ENCODE measurements at regions of chr5 and their contacts with region 1.

Region 1: GRCh38 chr5:157743163-157744050 is at the start of gene LSM11:
- DNase-seq: peak; percentile 95
- ATAC-seq: peak; percentile 92
- H3K4me3 Mint-ChIP-seq: peak within 1 kb of the TSS; percentile 93
- H3K27ac Mint-ChIP-seq: peak within 1 kb of the TSS; percentile 89
- H3K4me1 Mint-ChIP-seq: peaks cover 36% of the 10 kb centered on the region
- H3K27me3 Mint-ChIP-seq: no peaks in the 10 kb centered on the region
- total RNA-seq, gene LSM11: 6.2 to 8.0 TPM

Region 2: GRCh38 chr5:157342822-157343402 is 400.5 kb before region 1 on chr5:
- CTCF ChIA-PET with region 1: interaction called, 7 read pairs
- POLR2A ChIA-PET with region 1: no interaction called
- intact Hi-C with region 1: loop called (anchors 5 kb)
- DNase-seq: peak; percentile 62
- ATAC-seq: peak; percentile 23
- H3K4me3 Mint-ChIP-seq: no peak overlapping the region
- H3K27ac Mint-ChIP-seq: peak overlapping the region; percentile 80
- H3K4me1 Mint-ChIP-seq: peaks cover 40% of the 10 kb centered on the region
- H3K27me3 Mint-ChIP-seq: no peaks in the 10 kb centered on the region

Region 3: DNA sequence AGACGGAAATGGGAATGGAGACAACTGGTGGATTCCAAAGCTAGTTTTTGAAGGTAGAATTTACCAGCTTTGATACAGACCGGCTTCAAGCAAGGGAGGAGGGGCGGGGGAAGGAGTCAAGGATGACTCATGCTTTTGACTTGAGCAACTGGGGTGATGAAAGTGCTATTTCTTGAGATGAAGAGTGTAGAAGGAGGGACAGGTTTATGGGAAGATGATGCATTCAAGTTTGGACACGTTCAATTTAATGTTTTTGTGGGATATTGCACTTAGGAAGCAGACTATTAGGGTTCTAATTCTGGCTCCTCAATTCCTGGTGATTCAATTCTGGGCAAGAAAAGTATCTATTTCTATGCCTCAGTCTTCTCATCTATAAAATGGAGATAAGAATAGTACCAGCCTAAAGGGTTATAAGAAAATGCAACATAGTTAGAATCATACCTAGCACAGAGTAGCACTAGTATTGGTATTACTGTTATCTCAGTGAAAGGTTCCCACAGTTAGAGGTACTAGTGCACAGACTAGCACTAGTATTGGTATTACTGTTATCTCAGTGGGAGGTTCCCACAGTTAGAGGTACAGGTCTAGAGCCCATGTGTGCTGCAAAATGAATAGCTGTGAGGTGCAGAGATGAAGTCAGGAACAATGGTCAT is 278.8 kb before region 1 on chr5:
- CTCF ChIA-PET with region 1: interaction called, 6 read pairs
- POLR2A ChIA-PET with region 1: no interaction called
- intact Hi-C with region 1: loop called in 1 of 2 experiments (anchors 1 kb)
- DNase-seq: peak; percentile 87
- ATAC-seq: peak; percentile 92
- H3K4me3 Mint-ChIP-seq: peak overlapping the region; percentile 34
- H3K27ac Mint-ChIP-seq: peak overlapping the region; percentile 84
- H3K4me1 Mint-ChIP-seq: peaks cover 36% of the 10 kb centered on the region
- H3K27me3 Mint-ChIP-seq: peaks cover 18% of the 10 kb centered on the region

Region 4: GRCh38 chr5:157575381-157576020 is 167.9 kb before region 1 on chr5 and contains the start of gene ADAM19:
- CTCF ChIA-PET with region 1: interaction called, 3 read pairs
- POLR2A ChIA-PET with region 1: no interaction called
- intact Hi-C with region 1: loop called in 1 of 2 experiments (anchors 1 kb)
- DNase-seq: peak; percentile 70
- ATAC-seq: peak; percentile 75
- H3K4me3 Mint-ChIP-seq: peak within 1 kb of the TSS; percentile 85
- H3K27ac Mint-ChIP-seq: peak within 1 kb of the TSS; percentile 83
- H3K4me1 Mint-ChIP-seq: peaks cover 46% of the 10 kb centered on the region
- H3K27me3 Mint-ChIP-seq: peaks cover 4% of the 10 kb centered on the region
- total RNA-seq, gene ADAM19: 63.6 to 69.5 TPM

Region 5: DNA sequence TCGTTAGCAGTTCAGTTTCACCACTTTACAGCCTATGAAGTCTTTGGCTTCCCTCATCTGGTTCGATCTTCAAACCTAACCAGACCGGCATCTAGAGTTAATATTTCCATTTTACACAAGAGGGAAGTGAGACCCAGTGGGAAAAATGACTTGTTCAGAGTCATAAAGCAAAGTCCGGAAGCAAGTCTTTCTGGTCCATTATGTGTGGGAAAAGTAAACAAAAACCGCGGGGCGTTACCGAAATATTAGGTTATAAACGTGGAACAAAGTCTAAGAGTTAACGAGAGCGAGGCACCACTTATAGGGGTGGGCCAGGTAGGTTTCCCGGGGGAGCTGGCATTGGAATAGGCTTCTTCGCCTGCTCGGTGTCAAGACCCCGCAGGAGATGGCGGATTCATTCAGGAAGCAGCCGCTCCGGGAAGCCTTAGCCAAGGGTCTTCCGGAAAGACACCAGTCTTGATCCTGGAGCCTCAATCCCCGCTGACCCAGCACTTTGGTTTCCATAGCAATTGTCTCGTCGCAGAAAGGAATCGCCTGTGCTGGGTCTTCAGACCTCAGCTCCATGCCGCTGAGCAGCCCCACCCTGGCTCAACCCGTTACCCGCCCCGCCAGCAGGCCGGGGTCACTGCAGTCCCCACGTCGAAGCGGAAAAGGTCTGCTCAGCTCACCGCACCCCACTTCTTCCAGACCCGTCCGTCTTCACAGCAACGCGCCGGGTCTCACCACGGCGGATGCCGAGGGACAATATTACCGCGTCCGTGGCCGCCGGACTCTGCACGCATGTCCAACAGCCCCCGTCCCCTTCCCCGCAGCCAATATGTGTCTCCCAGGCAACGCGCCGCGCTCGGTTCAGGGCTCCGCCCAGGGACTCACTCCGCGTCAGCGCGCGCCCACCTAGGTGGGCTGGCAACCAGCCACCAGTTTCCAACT is 72.5 kb before region 1 on chr5 and contains the start of gene C5orf52:
- CTCF ChIA-PET with region 1: interaction called, 26 read pairs
- POLR2A ChIA-PET with region 1: no interaction called
- intact Hi-C with region 1: loop called (anchors 1 kb)
- DNase-seq: peak; percentile 47
- ATAC-seq: peak; percentile 43
- H3K4me3 Mint-ChIP-seq: peak within 1 kb of the TSS; percentile 81
- H3K27ac Mint-ChIP-seq: peak within 1 kb of the TSS; percentile 83
- H3K4me1 Mint-ChIP-seq: peaks cover 23% of the 10 kb centered on the region
- H3K27me3 Mint-ChIP-seq: peaks cover 16% of the 10 kb centered on the region
- total RNA-seq, gene C5orf52: not detected

Region 6: GRCh38 chr5:157828944-157829632 is 85.7 kb after region 1 on chr5:
- CTCF ChIA-PET with region 1: no interaction called
- POLR2A ChIA-PET with region 1: no interaction called
- intact Hi-C with region 1: no loop called
- DNase-seq: no peak
- ATAC-seq: peak; percentile 53
- H3K4me3 Mint-ChIP-seq: no peak overlapping the region
- H3K27ac Mint-ChIP-seq: no peak overlapping the region
- H3K4me1 Mint-ChIP-seq: peaks cover 53% of the 10 kb centered on the region
- H3K27me3 Mint-ChIP-seq: no peaks in the 10 kb centered on the region

Measured in activated CD4-positive, alpha-beta T cell treated with anti-CD3 and anti-CD28 coated beads for 36 hours (primary cell).